GM12878 (cell line): ENCODE measurements at regions of chr11 and their contacts with region 1.

Region 1: GRCh38 chr11:116499396-116500003 is 273.3 kb downstream of the BUD13 start:
- DNase-seq: no peak
- ATAC-seq: peak; percentile 88
- H3K4me3 ChIP-seq: no peak overlapping the region
- H3K27ac ChIP-seq: no peak overlapping the region
- H3K4me1 ChIP-seq: no peaks in the 10 kb centered on the region
- H3K27me3 ChIP-seq: peaks cover 5 to 12% of the 10 kb centered on the region in 2 experiments
- CTCF ChIP-seq: peak; percentile 48 to 62 (median 55)
- EP300 ChIP-seq: no peak
- POLR2A ChIP-seq: no peak
- RAD21 ChIP-seq: peak; percentile 61

Region 2: GRCh38 chr11:115324581-115325432 is 1174.7 kb before region 1 on chr11:
- CTCF ChIA-PET with region 1: interaction called, 7 read pairs
- POLR2A ChIA-PET with region 1: no interaction called
- RAD21 ChIA-PET with region 1: interaction called, 5 read pairs
- SMC1A ChIA-PET with region 1: no interaction called
- in situ Hi-C with region 1: no loop called
- intact Hi-C with region 1: loop called (anchors 1 kb)
- DNase-seq: peak; percentile 13
- ATAC-seq: peak; percentile 94
- H3K4me3 ChIP-seq: no peak overlapping the region
- H3K27ac ChIP-seq: no peak overlapping the region
- H3K4me1 ChIP-seq: no peaks in the 10 kb centered on the region
- H3K27me3 ChIP-seq: peaks cover 0 to 2% of the 10 kb centered on the region in 2 experiments; a peak in 3 of 4 replicates
- CTCF ChIP-seq: peak; percentile 76 to 93 (median 83)
- EP300 ChIP-seq: no peak
- POLR2A ChIP-seq: no peak
- RAD21 ChIP-seq: peak; percentile 92

Region 3: GRCh38 chr11:116454020-116454645 is 45.4 kb before region 1 on chr11:
- CTCF ChIA-PET with region 1: interaction called, 3 read pairs
- POLR2A ChIA-PET with region 1: no interaction called
- RAD21 ChIA-PET with region 1: no interaction called
- SMC1A ChIA-PET with region 1: no interaction called
- in situ Hi-C with region 1: no loop called
- intact Hi-C with region 1: loop called (anchors 1 kb)
- DNase-seq: no peak
- ATAC-seq: peak; percentile 80
- H3K4me3 ChIP-seq: no peak overlapping the region
- H3K27ac ChIP-seq: no peak overlapping the region
- H3K4me1 ChIP-seq: no peaks in the 10 kb centered on the region
- H3K27me3 ChIP-seq: no peaks in the 10 kb centered on the region; a peak in 2 of 4 replicates
- CTCF ChIP-seq: peak; percentile 63 to 67 (median 66)
- EP300 ChIP-seq: no peak
- POLR2A ChIP-seq: no peak
- RAD21 ChIP-seq: peak; percentile 49